Aorta (tissue), 5 donors: ENCODE measurements at regions of chr1 and their contacts with region 1.

Region 1: GRCh38 chr1:247103859-247104591 is at the start of gene ZNF669:
- DNase-seq: peak; percentile 97 to 98
- ATAC-seq: peak; percentile 100
- H3K4me3 ChIP-seq: peak within 1 kb of the TSS; percentile 50 to 78
- H3K27ac ChIP-seq: peak within 1 kb of the TSS; percentile 23 to 41
- H3K4me1 ChIP-seq: no peaks in the 10 kb centered on the region
- H3K27me3 ChIP-seq: no peaks in the 10 kb centered on the region
- total RNA-seq, gene ZNF669: 6.0 to 8.4 TPM

Region 2: GRCh38 chr1:246931549-246932365 is 172.3 kb before region 1 on chr1 and contains the start of gene AHCTF1:
- intact Hi-C with region 1: loop called in 1 of 2 experiments (anchors 10 kb)
- DNase-seq: peak; percentile 98
- ATAC-seq: peak; percentile 99
- H3K4me3 ChIP-seq: peak within 1 kb of the TSS; percentile 38 to 81
- H3K27ac ChIP-seq: peak within 1 kb of the TSS; percentile 33 to 84
- H3K4me1 ChIP-seq: no peaks in the 10 kb centered on the region
- H3K27me3 ChIP-seq: no peaks in the 10 kb centered on the region
- total RNA-seq, gene AHCTF1: 31.5 to 32.4 TPM

Region 3: DNA sequence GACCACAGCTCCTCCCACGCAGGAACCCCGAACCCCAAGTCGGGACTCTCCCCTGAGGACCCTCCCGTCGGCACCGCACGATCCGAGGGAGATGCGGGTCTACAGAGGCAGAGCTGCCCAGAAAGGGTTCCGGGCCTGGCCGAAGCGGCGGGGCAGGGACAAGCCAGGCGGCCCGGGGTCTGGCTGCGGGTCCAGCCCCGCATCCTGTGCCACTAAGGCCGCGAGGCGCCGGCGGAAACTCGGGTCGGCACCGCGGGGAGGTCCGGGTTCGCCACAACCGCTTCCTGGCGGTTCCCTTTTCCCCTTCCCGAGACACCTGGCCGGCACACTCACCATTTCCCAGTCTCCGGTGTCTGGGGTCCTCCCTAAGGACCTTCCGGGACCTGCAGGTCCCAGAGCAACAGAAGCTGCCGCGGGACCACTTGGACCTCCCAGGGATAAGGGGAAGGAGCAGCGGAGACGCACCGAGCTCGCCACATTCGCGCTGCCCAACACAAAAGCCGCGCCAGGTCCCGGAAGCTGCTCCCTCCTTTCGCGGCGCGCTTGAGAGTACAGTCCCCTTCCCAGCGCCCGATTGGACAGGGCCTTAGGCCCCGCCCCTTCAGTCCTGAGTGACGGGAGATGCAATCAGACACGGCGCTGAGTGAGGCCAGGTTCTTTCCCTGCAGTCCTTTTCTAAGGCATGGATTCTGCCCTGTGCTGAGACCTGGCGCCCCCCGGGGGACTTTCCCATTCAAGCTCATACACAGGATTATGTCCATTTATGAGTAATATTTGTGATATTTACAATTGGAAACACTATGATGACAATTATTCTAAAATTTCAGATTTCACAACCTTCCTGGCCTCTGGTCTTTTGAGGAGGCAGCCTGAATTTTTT is 25.5 kb before region 1 on chr1 and contains the start of gene ZNF670:
- intact Hi-C with region 1: loop called in 1 of 2 experiments (anchors 1 kb)
- DNase-seq: peak; percentile 96 to 98
- ATAC-seq: peak; percentile 99
- H3K4me3 ChIP-seq: peak within 1 kb of the TSS; percentile 86 to 94
- H3K27ac ChIP-seq: peak within 1 kb of the TSS in 1 of 2 donors; percentile 50
- H3K4me1 ChIP-seq: no peaks in the 10 kb centered on the region
- H3K27me3 ChIP-seq: no peaks in the 10 kb centered on the region
- total RNA-seq, gene ZNF670: 2.9 to 4.1 TPM